ENCODE measurements at regions of chr11 and their contacts with region 1.

Region 1: GRCh38 chr11:88886796-88887195 is 179.0 kb downstream of the GRM5 start:
- DNase-seq: peak; percentile 55
- ATAC-seq: peak; percentile 94
- H3K4me3 ChIP-seq: no peak overlapping the region
- H3K27ac ChIP-seq: no peak overlapping the region
- H3K4me1 ChIP-seq: no peaks in the 10 kb centered on the region
- H3K27me3 ChIP-seq: no peaks in the 10 kb centered on the region
- CTCF ChIP-seq: peak; percentile 59 to 66 (median 59)
- POLR2A ChIP-seq: no peak
- RAD21 ChIP-seq: peak; percentile 86

Region 2: DNA sequence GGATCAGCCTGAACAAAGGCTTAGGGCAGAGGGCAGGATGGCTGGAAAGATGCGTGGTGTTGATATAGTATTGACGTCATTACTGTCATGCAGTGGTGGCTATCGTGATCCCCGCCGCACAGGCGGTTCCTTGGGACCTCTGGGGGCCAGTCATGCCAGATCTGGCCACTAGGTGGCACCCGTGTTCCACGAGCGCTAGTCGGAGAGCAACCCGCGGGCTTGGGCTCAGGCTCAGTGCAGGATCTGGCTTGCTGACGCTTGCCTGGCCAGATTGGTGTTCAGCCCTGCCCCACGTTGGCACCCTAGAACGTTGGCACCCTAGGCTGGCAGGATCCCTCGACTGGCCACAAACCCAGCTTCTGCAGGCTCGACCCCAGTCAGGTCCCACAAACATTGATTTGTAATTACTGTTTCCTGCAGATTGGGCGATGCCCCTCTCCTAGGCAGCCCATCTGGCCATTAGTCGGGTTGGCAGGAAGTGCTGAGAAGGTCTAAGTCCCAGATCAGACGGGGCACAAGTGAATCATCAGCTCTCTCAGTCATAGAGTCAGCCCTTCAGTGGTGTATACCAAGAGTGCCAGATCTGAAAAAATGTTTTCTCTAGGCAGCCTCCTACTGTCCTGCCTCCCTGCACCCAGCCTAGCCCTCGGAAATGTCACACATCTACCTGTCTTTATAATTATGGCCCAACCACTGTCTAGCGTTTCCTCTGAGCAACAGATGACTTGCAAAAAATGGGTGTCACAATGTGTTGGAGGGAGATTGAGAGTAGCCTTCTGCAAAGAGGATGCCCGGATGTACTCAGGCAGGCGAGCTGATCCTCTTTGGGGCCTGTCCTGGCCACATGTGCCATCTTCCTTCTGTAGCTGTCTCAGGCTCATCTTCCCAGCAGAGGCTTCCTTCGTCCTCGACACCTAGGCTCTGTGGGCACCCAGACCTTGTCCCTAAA is 1533.8 kb before region 1 on chr11:
- CTCF ChIA-PET with region 1: no interaction called
- POLR2A ChIA-PET with region 1: no interaction called
- RAD21 ChIA-PET with region 1: no interaction called
- intact Hi-C with region 1: loop called (anchors 5 kb)
- DNase-seq: peak; percentile 57
- ATAC-seq: peak; percentile 100
- H3K4me3 ChIP-seq: no peak overlapping the region
- H3K27ac ChIP-seq: no peak overlapping the region
- H3K4me1 ChIP-seq: peaks cover 0 to 7% of the 10 kb centered on the region in 2 experiments; a peak in 1 of 4 replicates
- H3K27me3 ChIP-seq: no peaks in the 10 kb centered on the region
- CTCF ChIP-seq: peak; percentile 69 to 98 (median 95)
- POLR2A ChIP-seq: no peak
- RAD21 ChIP-seq: peak; percentile 95

Region 3: DNA sequence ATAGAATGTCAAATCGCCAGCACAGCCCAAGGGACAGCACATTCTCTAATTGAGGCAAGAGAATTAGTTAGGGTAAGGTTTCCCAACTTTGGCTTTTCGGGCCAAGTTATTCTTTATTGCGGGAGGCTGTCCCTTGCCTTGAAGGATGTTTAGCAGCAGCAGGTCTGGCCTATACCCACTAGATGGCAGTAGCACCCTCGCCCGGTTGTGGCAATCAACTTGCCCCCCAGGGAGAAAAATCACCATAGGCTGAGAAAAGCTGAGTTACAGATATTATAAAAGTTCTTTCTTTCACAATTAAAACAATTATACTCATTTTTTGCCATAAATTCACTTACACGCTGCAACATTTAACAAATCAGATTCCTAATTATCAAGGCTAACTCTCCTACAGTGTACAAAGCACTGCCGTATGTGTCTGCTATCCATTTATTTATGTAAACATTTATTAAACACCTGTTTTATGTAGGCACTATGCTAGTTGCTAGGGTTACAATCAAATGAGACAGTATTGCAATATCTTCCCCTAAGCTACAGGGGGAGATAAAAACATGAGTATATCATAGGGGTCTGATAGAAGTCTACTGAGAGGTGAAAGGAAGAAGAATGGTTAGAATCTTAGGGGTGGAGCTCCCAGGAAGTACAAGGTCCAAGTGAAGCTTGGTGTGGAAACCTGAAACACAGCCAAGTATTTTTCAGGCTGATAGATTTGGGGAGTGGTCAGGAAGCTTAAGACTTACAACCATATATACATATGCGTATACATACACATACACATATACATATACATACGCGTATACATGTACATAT is 1163.8 kb before region 1 on chr11:
- CTCF ChIA-PET with region 1: no interaction called
- POLR2A ChIA-PET with region 1: no interaction called
- RAD21 ChIA-PET with region 1: no interaction called
- intact Hi-C with region 1: loop called (anchors 5 kb)
- DNase-seq: no peak
- ATAC-seq: peak; percentile 79
- H3K4me3 ChIP-seq: no peak overlapping the region
- H3K27ac ChIP-seq: no peak overlapping the region
- H3K4me1 ChIP-seq: no peaks in the 10 kb centered on the region
- H3K27me3 ChIP-seq: 0 out of 2 replicates have a peak, but pooled peaks cover 2% of the 10 kb centered on the region
- CTCF ChIP-seq: peak; percentile 33 to 86 (median 80); a peak in 5 of 6 replicates
- POLR2A ChIP-seq: no peak
- RAD21 ChIP-seq: peak; percentile 45

Region 4: GRCh38 chr11:88016392-88017170 is 870.2 kb before region 1 on chr11:
- CTCF ChIA-PET with region 1: interaction called, 12 read pairs
- POLR2A ChIA-PET with region 1: no interaction called
- RAD21 ChIA-PET with region 1: interaction called, 4 read pairs
- intact Hi-C with region 1: no loop called
- DNase-seq: peak; percentile 78
- ATAC-seq: peak; percentile 98
- H3K4me3 ChIP-seq: no peak overlapping the region
- H3K27ac ChIP-seq: no peak overlapping the region
- H3K4me1 ChIP-seq: no peaks in the 10 kb centered on the region
- H3K27me3 ChIP-seq: no peaks in the 10 kb centered on the region
- CTCF ChIP-seq: peak; percentile 72 to 82 (median 82)
- POLR2A ChIP-seq: no peak
- RAD21 ChIP-seq: peak; percentile 92

Region 5: GRCh38 chr11:88552377-88553062 is 334.3 kb before region 1 on chr11:
- CTCF ChIA-PET with region 1: interaction called, 14 read pairs
- POLR2A ChIA-PET with region 1: no interaction called
- RAD21 ChIA-PET with region 1: no interaction called
- intact Hi-C with region 1: no loop called
- DNase-seq: peak; percentile 48
- ATAC-seq: peak; percentile 83
- H3K4me3 ChIP-seq: no peak overlapping the region
- H3K27ac ChIP-seq: no peak overlapping the region
- H3K4me1 ChIP-seq: peaks cover 9 to 26% of the 10 kb centered on the region in 2 experiments; a peak in 3 of 4 replicates
- H3K27me3 ChIP-seq: no peaks in the 10 kb centered on the region
- CTCF ChIP-seq: peak; percentile 44 to 90 (median 88); a peak in 5 of 6 replicates
- POLR2A ChIP-seq: no peak
- RAD21 ChIP-seq: peak; percentile 72

Region 6: DNA sequence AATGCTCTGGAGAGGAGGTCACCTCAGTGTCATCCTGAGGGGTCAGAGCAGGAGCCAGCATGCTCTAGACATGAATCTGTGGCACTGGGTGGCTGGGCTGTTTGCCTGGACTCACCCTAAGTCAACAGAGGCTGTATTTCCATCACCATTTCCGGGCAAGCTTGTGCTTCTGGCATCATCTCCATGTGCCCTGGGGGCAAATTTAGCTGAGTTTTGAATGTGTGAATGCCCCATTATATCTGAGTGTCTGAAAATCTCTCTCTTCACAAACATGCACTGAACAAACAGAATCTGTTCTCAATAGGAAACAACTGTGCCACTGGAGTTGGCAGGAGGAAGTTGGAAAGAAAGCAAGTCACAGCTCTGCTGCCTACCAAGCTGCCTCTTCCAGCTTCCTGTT is 177.2 kb before region 1 on chr11:
- CTCF ChIA-PET with region 1: no interaction called
- POLR2A ChIA-PET with region 1: no interaction called
- RAD21 ChIA-PET with region 1: no interaction called
- intact Hi-C with region 1: no loop called
- DNase-seq: no peak
- ATAC-seq: no peak
- H3K4me3 ChIP-seq: no peak overlapping the region
- H3K27ac ChIP-seq: no peak overlapping the region
- H3K4me1 ChIP-seq: no peaks in the 10 kb centered on the region
- H3K27me3 ChIP-seq: no peaks in the 10 kb centered on the region
- CTCF ChIP-seq: no peak
- POLR2A ChIP-seq: no peak
- RAD21 ChIP-seq: no peak

Region 7: DNA sequence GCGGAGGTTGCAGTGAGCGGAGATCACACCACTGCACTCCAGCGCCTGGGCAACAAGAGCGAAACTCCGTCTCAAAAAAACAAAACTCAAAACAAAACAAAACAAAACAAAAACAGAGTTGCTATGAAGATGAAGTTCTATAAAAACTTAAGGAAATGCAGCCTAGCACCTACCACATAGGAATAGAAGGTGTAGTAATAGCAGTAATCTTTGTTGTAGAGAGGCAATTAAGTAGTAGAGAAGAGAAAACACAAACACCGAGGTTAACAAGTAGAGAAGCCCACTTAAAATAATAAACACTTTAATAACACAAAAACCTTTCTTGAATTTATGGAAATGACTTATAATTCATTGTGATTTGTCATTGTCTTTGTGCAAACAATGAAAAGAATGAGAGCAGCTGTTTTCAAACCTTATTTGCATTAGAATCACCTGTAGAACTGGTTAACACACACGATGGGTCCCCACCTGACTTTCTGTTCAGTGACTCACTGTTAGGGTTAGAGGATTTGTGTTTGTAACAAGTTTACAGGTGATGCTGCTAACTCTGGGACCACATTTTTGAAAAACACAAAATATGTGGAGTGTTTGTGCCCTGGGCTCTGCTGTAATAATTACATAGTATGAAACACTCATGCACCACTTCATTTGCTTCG is 334.0 kb after region 1 on chr11:
- CTCF ChIA-PET with region 1: no interaction called
- POLR2A ChIA-PET with region 1: no interaction called
- RAD21 ChIA-PET with region 1: no interaction called
- intact Hi-C with region 1: no loop called
- DNase-seq: no peak
- ATAC-seq: no peak
- H3K4me3 ChIP-seq: no peak overlapping the region
- H3K27ac ChIP-seq: no peak overlapping the region
- H3K4me1 ChIP-seq: no peaks in the 10 kb centered on the region
- H3K27me3 ChIP-seq: no peaks in the 10 kb centered on the region
- CTCF ChIP-seq: no peak
- POLR2A ChIP-seq: no peak
- RAD21 ChIP-seq: no peak

Measured in HCT116 (cell line).